ENCODE measurements at regions of chr11 and their contacts with region 1.

Region 1: DNA sequence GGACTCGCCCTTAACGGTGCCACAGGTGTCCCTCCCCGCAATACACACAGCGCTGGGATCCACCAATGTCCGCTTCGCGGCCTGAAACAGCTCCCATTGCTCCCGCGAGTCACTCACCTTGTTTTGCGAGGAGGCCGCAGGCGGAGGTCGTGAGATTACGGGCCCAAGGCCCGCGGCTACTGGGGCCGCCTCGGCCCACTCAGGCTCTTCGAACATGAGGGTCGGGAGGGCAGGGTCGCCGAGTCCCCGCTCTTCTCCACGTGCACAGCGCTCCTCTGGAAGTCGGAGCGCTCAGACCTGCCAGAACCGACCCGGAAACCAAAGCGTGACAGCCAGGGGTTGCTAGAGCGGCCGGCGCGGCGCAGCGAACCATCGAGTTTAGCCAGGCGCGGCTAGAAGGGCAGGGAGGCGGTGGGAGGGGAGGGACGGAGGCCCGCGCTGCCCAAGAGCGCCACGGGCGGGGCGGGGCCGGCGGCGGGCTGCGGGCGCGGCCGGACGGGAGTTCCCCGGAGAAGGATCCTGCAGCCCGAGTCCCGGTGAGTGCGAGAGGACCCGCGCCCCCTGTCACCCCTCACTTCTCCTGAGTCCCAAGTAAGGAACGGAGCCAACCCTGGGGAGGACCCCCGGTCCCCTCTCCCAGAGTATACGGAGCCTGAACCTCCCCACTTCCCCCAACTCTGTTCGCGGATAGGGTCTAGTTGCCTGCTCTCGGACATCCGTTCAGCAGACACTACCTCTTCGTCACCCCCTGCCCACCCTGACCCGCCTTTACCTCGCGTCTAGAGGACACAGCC is at the starts of genes ILK and RRP8:
- DNase-seq: peak; percentile 92
- H3K4me3 Mint-ChIP-seq: no peak within 1 kb of the TSS
- H3K27ac Mint-ChIP-seq: no peak within 1 kb of the TSS
- H3K4me1 Mint-ChIP-seq: peaks cover 33% of the 10 kb centered on the region
- H3K27me3 Mint-ChIP-seq: no peaks in the 10 kb centered on the region
- total RNA-seq, gene ILK: 65.2 to 65.7 TPM
- total RNA-seq, gene RRP8: 31.9 to 33.5 TPM

Region 2: GRCh38 chr11:6419009-6419631 is 184.4 kb before region 1 on chr11 and contains the start of gene APBB1:
- CTCF ChIA-PET with region 1: no interaction called
- intact Hi-C with region 1: loop called (anchors 2 kb)
- DNase-seq: peak; percentile 75
- H3K4me3 Mint-ChIP-seq: peak within 1 kb of the TSS; percentile 76
- H3K27ac Mint-ChIP-seq: peak within 1 kb of the TSS; percentile 77
- H3K4me1 Mint-ChIP-seq: peaks cover 3% of the 10 kb centered on the region
- H3K27me3 Mint-ChIP-seq: no peaks in the 10 kb centered on the region
- total RNA-seq, gene APBB1: 44.5 to 45.1 TPM

Region 3: GRCh38 chr11:6531267-6531752 is 72.2 kb before region 1 on chr11:
- CTCF ChIA-PET with region 1: interaction called, 10 read pairs
- intact Hi-C with region 1: loop called (anchors 1 kb)
- DNase-seq: peak; percentile 24
- H3K4me3 Mint-ChIP-seq: no peak overlapping the region
- H3K27ac Mint-ChIP-seq: no peak overlapping the region
- H3K4me1 Mint-ChIP-seq: peaks cover 16% of the 10 kb centered on the region
- H3K27me3 Mint-ChIP-seq: no peaks in the 10 kb centered on the region

Region 4: DNA sequence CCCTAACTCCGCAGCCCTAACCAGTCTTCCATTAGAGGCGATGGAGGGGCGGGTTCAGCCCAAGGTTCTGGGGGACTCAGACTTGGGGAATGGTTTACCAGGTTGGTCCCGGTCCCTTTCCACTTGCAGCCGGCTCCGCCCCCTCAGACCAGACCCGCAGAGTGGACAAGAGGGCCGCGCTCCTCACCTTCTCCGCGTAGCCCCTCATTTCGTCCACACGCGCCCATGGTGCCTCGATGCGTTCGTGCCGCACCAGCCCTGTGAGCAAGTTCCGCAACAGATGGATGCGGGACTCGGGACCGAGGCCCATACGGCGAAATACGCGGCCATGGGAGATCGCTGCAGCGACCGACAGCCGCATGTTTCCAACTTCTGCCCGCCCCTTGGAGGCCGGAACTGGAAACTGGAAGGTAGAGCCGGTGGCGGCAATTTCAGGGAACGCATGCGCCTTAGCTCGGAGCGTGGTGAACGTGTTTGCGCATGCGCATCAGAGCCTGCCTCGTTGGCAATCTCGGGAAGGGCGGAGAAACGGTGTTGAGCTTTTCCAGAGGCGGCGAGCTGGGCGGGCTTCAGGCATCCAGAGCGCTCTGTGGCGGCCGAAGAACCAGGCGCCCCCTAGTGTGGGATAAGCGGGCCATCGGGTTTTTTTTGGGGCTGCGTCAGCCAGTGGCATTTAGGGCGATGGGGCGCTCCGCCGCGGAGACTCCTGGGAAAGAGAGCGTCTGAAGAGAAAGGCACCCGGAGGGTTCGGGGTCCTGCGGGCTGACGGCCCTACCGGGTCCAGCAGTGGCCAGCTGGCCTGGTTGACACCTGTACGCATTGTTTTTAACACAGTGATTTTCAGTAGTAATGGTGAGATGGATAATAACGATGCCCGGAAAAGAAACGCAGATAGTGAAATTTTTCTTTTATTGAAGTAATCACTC is 79.7 kb after region 1 on chr11 and contains the start of gene MRPL17:
- CTCF ChIA-PET with region 1: interaction called, 37 read pairs
- intact Hi-C with region 1: loop called (anchors 1 kb)
- DNase-seq: peak; percentile 100
- H3K4me3 Mint-ChIP-seq: peak within 1 kb of the TSS; percentile 97
- H3K27ac Mint-ChIP-seq: peak within 1 kb of the TSS; percentile 98
- H3K4me1 Mint-ChIP-seq: peaks cover 35% of the 10 kb centered on the region
- H3K27me3 Mint-ChIP-seq: no peaks in the 10 kb centered on the region
- total RNA-seq, gene MRPL17: 99.7 to 102 TPM

Region 5: GRCh38 chr11:6737872-6738466 is 134.5 kb after region 1 on chr11:
- CTCF ChIA-PET with region 1: interaction called, 7 read pairs
- intact Hi-C with region 1: loop called (anchors 1 kb)
- DNase-seq: peak; percentile 87
- H3K4me3 Mint-ChIP-seq: no peak overlapping the region
- H3K27ac Mint-ChIP-seq: peak overlapping the region; percentile 86
- H3K4me1 Mint-ChIP-seq: peaks cover 92% of the 10 kb centered on the region
- H3K27me3 Mint-ChIP-seq: no peaks in the 10 kb centered on the region

Region 6: GRCh38 chr11:7672960-7673723 is 1069.7 kb after region 1 on chr11 and contains the start of gene CYB5R2:
- CTCF ChIA-PET with region 1: no interaction called
- intact Hi-C with region 1: loop called (anchors 5 kb)
- DNase-seq: peak; percentile 17
- H3K4me3 Mint-ChIP-seq: peak within 1 kb of the TSS; percentile 64
- H3K27ac Mint-ChIP-seq: peak within 1 kb of the TSS; percentile 66
- H3K4me1 Mint-ChIP-seq: peaks cover 49% of the 10 kb centered on the region
- H3K27me3 Mint-ChIP-seq: peaks cover 36% of the 10 kb centered on the region
- total RNA-seq, gene CYB5R2: 5.5 to 8.2 TPM

Measured in activated naive CD4-positive, alpha-beta T cell treated with anti-CD3 and anti-CD28 coated beads for 36 hours (primary cell).